IMR-90 (cell line): ENCODE measurements at regions of chr12 and their contacts with region 1.

Region 1: GRCh38 chr12:124512667-124513296 is 54.6 kb downstream of the NCOR2 start:
- DNase-seq: peak; percentile 98
- ATAC-seq: peak; percentile 68
- H3K4me3 ChIP-seq: no peak overlapping the region
- H3K27ac ChIP-seq: peak overlapping the region; percentile 75
- H3K4me1 ChIP-seq: peaks cover 45% of the 10 kb centered on the region
- H3K27me3 ChIP-seq: no peaks in the 10 kb centered on the region
- CTCF ChIP-seq: no peak
- POLR2A ChIP-seq: no peak
- RAD21 ChIP-seq: peak; percentile 12; the same call in 1 of the 2 replicates

Region 2: GRCh38 chr12:123816896-123817537 is 695.8 kb before region 1 on chr12:
- CTCF ChIA-PET with region 1: no interaction called
- POLR2A ChIA-PET with region 1: interaction called, 10 read pairs
- dilution Hi-C with region 1: no loop called
- in situ Hi-C with region 1: no loop called
- intact Hi-C with region 1: no loop called
- DNase-seq: no peak
- ATAC-seq: no peak
- H3K4me3 ChIP-seq: no peak overlapping the region
- H3K27ac ChIP-seq: no peak overlapping the region
- H3K4me1 ChIP-seq: no peaks in the 10 kb centered on the region
- H3K27me3 ChIP-seq: peaks cover 2% of the 10 kb centered on the region
- CTCF ChIP-seq: no peak
- POLR2A ChIP-seq: no peak
- RAD21 ChIP-seq: no peak

Region 3: GRCh38 chr12:124497658-124498057 is 15.1 kb before region 1 on chr12:
- CTCF ChIA-PET with region 1: no interaction called
- POLR2A ChIA-PET with region 1: no interaction called
- dilution Hi-C with region 1: no loop called
- in situ Hi-C with region 1: no loop called
- intact Hi-C with region 1: loop called (anchors 2 kb)
- DNase-seq: peak; percentile 96
- ATAC-seq: peak; percentile 80
- H3K4me3 ChIP-seq: no peak overlapping the region
- H3K27ac ChIP-seq: peak overlapping the region; percentile 75
- H3K4me1 ChIP-seq: peaks cover 34% of the 10 kb centered on the region
- H3K27me3 ChIP-seq: no peaks in the 10 kb centered on the region
- CTCF ChIP-seq: 0 out of 2 replicates have a peak, but pooled peaks have one; percentile 4
- POLR2A ChIP-seq: peak; percentile 78
- RAD21 ChIP-seq: peak; percentile 34; the same call in 1 of the 2 replicates